GM12878 (cell line): ENCODE measurements at regions of chr1 and their contacts with region 1.

Region 1: GRCh38 chr1:11037740-11038182 is 9.3 kb downstream of the MASP2 start:
- DNase-seq: peak; percentile 51
- ATAC-seq: peak; percentile 99
- H3K4me3 ChIP-seq: no peak overlapping the region
- H3K27ac ChIP-seq: no peak overlapping the region
- H3K4me1 ChIP-seq: no peaks in the 10 kb centered on the region
- H3K27me3 ChIP-seq: no peaks in the 10 kb centered on the region
- CTCF ChIP-seq: peak; percentile 96 to 99 (median 98); a peak in 5 of 6 replicates
- EP300 ChIP-seq: no peak
- POLR2A ChIP-seq: no peak
- RAD21 ChIP-seq: peak; percentile 99

Region 2: GRCh38 chr1:10494754-10495474 is 542.8 kb before region 1 on chr1:
- CTCF ChIA-PET with region 1: interaction called, 8 read pairs
- POLR2A ChIA-PET with region 1: no interaction called
- RAD21 ChIA-PET with region 1: interaction called, 10 read pairs
- SMC1A ChIA-PET with region 1: interaction called, 4 read pairs
- in situ Hi-C with region 1: no loop called
- intact Hi-C with region 1: no loop called
- DNase-seq: peak; percentile 88
- ATAC-seq: peak; percentile 96
- H3K4me3 ChIP-seq: peak overlapping the region; percentile 56
- H3K27ac ChIP-seq: peak overlapping the region; percentile 83
- H3K4me1 ChIP-seq: peaks cover 25% of the 10 kb centered on the region
- H3K27me3 ChIP-seq: no peaks in the 10 kb centered on the region
- CTCF ChIP-seq: peak; percentile 88 to 93 (median 92)
- EP300 ChIP-seq: peak; percentile 38 to 61; a peak in 1 of 4 replicates
- POLR2A ChIP-seq: no peak
- RAD21 ChIP-seq: peak; percentile 82

Region 3: GRCh38 chr1:11059990-11060830 is 22.4 kb after region 1 on chr1 and contains the start of gene SRM:
- CTCF ChIA-PET with region 1: interaction called, 36 read pairs
- POLR2A ChIA-PET with region 1: interaction called, 4 read pairs
- RAD21 ChIA-PET with region 1: interaction called, 16 read pairs
- SMC1A ChIA-PET with region 1: interaction called, 25 read pairs
- in situ Hi-C with region 1: no loop called
- intact Hi-C with region 1: no loop called
- DNase-seq: peak; percentile 40
- ATAC-seq: peak; percentile 94
- H3K4me3 ChIP-seq: peak within 1 kb of the TSS; percentile 95
- H3K27ac ChIP-seq: peak within 1 kb of the TSS; percentile 85
- H3K4me1 ChIP-seq: peaks cover 26% of the 10 kb centered on the region
- H3K27me3 ChIP-seq: no peaks in the 10 kb centered on the region
- CTCF ChIP-seq: peak in 2 of 3 experiments; percentile 13 to 41; a peak in 1 of 6 replicates
- EP300 ChIP-seq: no peak
- POLR2A ChIP-seq: peak; percentile 82
- RAD21 ChIP-seq: no peak
- polyA plus RNA-seq, gene SRM: 16.7 to 46.6 TPM

Region 4: DNA sequence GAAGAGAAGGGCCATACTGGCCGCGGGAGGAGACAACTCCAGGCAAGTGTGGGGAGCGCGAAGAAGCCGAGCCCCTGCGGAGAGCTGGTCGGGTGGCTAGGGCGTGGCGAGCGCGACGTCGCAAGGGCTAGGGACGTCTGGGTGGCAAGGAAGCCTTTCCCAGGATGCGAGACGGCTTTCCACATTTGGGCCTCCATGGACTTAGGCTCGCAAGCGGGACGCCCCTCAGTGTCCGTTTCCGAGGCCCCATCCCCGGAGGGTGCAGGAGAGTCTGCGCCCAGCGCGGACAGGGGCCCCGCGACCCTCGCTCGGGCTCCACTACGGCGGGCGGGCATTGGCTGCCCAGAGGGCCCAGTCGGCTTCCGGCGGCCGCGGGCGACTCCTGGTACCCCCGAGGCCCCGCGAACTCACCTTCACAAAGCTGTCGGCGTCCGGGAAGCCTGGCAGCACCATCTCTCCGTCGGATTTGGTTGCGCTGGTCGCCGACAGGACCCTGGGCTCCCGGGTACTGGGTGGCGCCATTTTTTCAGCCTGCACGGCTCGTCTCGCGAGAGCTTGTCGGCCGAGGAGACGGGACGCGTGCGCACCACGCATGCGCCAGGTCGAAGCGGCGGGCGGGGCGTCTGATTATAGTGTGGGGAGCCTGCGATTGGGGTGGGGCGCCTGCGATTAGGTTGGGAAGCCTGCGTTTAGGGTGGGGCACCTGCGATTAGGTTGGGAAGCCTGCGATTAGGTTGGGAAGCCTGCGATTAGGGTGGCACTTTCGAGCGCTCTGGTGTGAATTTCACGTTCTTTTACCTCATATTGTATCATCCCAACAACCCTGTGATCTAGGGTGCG is 61.8 kb after region 1 on chr1 and contains the start of gene EXOSC10:
- CTCF ChIA-PET with region 1: interaction called, 19 read pairs
- POLR2A ChIA-PET with region 1: interaction called, 4 read pairs
- RAD21 ChIA-PET with region 1: interaction called, 15 read pairs
- SMC1A ChIA-PET with region 1: interaction called, 17 read pairs
- in situ Hi-C with region 1: no loop called
- intact Hi-C with region 1: no loop called
- DNase-seq: peak; percentile 66
- ATAC-seq: peak; percentile 98
- H3K4me3 ChIP-seq: peak within 1 kb of the TSS; percentile 92
- H3K27ac ChIP-seq: peak within 1 kb of the TSS; percentile 88
- H3K4me1 ChIP-seq: peaks cover 4% of the 10 kb centered on the region; the same call in 1 of the 2 replicates
- H3K27me3 ChIP-seq: no peaks in the 10 kb centered on the region
- CTCF ChIP-seq: no peak
- EP300 ChIP-seq: no peak
- POLR2A ChIP-seq: peak; percentile 87
- RAD21 ChIP-seq: no peak
- polyA plus RNA-seq, gene EXOSC10: 16.2 to 16.7 TPM

Region 5: DNA sequence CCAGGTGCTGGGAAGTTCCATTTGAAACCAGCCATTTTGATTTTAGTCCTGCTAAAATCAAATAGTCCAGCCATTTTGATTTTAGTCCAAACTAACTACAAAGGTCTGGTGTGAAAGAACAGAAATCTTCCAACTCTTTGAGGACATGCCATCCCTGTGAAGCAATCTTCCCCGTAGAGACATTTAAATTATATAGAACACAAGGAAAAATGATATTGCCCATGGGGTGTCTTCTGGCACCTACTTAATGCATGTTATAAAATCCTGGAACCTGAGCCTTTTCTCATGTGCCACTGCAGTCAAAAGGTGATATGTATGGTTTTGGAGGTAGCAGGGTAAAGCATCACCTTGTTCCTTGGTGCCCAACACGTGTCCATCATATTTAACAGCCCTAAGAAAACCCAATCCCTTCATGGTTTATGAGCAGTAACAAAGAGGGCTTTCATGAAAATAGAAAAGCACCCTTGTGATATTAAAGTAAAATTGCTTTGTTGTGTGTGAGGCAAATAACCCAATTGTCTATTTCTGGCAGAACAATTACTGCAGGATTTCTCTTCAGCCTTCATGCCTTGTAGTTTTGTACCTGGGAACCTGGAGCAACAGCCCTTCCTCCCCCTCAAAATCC is 177.7 kb after region 1 on chr1:
- CTCF ChIA-PET with region 1: interaction called, 10 read pairs
- POLR2A ChIA-PET with region 1: no interaction called
- RAD21 ChIA-PET with region 1: interaction called, 7 read pairs
- SMC1A ChIA-PET with region 1: interaction called, 5 read pairs
- in situ Hi-C with region 1: no loop called
- intact Hi-C with region 1: no loop called
- DNase-seq: no peak
- ATAC-seq: no peak
- H3K4me3 ChIP-seq: no peak overlapping the region
- H3K27ac ChIP-seq: no peak overlapping the region
- H3K4me1 ChIP-seq: no peaks in the 10 kb centered on the region
- H3K27me3 ChIP-seq: no peaks in the 10 kb centered on the region
- CTCF ChIP-seq: no peak
- EP300 ChIP-seq: no peak
- POLR2A ChIP-seq: no peak
- RAD21 ChIP-seq: no peak

Region 6: GRCh38 chr1:11248155-11248554 is 210.4 kb after region 1 on chr1:
- CTCF ChIA-PET with region 1: interaction called, 35 read pairs
- POLR2A ChIA-PET with region 1: no interaction called
- RAD21 ChIA-PET with region 1: no interaction called
- SMC1A ChIA-PET with region 1: interaction called, 7 read pairs
- in situ Hi-C with region 1: no loop called
- intact Hi-C with region 1: no loop called
- DNase-seq: no peak
- ATAC-seq: no peak
- H3K4me3 ChIP-seq: no peak overlapping the region
- H3K27ac ChIP-seq: no peak overlapping the region
- H3K4me1 ChIP-seq: no peaks in the 10 kb centered on the region
- H3K27me3 ChIP-seq: no peaks in the 10 kb centered on the region
- CTCF ChIP-seq: 0 out of 6 replicates have a peak, but pooled peaks of 1 of the 3 experiments have one; percentile 11
- EP300 ChIP-seq: no peak
- POLR2A ChIP-seq: no peak
- RAD21 ChIP-seq: no peak

Region 7: GRCh38 chr1:11645670-11646265 is 608.0 kb after region 1 on chr1:
- CTCF ChIA-PET with region 1: interaction called, 132 read pairs
- POLR2A ChIA-PET with region 1: no interaction called
- RAD21 ChIA-PET with region 1: interaction called, 91 read pairs
- SMC1A ChIA-PET with region 1: interaction called, 57 read pairs
- in situ Hi-C with region 1: loop called (anchors 5 kb)
- intact Hi-C with region 1: loop called (anchors 1 kb)
- DNase-seq: no peak
- ATAC-seq: peak; percentile 79
- H3K4me3 ChIP-seq: no peak overlapping the region
- H3K27ac ChIP-seq: no peak overlapping the region
- H3K4me1 ChIP-seq: no peaks in the 10 kb centered on the region
- H3K27me3 ChIP-seq: no peaks in the 10 kb centered on the region; a peak in 2 of 4 replicates
- CTCF ChIP-seq: peak; percentile 73 to 85 (median 78)
- EP300 ChIP-seq: no peak
- POLR2A ChIP-seq: no peak
- RAD21 ChIP-seq: peak; percentile 73